GM13977 (cell line): ENCODE measurements at regions of chr14 and their contacts with region 1.

Region 1: DNA sequence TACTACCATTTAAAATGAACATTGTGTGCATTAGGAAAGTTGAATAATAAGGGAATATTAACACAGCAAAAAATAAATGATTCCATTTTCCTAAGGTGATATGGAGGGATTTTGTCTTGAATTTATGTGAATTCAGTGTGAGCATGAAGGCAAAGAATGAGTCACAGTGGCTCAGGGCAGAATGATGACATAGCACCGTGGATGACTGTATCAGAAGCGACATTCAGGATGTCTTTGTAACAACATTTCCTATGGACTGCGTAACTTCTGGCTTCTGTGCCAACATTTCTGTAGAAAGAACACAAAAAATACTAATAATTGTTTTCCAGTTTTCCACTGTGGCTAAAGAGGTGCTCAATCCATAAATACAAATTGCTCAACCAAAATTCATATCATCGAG is 54.6 kb downstream of the TTC8 start:
- DNase-seq: no peak
- CTCF ChIP-seq: no peak

Region 2: DNA sequence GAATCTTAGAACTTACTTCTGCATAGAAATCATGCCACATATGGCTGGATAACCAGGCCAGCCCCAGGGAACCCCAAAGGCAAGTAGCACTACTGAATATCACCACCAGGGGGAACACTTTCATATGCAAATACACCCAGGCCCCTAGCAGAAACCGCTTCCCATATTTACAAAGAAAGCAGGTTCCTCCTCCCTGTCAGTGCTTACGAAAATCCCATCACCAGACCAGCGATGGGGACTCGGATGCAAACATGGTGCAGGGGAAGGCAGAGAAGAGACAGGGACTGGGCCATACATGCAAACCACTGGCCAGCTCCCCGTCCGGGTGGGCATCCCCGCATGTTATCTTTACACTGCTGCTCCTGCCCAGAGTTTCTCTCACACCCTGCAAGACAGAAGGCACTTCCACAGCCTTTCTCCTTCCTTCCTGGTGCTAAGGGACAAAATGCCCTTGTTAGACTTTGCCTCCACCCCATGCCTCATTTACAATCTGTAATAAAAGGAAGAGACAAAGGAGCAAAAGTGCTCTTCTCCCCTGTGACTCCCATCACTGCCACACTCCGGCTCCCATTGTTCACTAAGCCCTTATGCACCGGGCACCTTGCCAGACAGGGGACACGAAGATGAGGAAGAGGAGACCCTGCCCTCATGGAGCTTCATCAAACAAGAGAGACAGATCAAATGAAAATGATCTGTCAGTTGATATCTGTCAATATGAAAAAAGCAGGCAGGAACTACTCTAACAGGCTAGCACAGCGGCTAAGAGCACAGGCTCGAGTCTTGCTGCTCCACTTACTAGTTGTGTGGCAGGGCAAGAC is 386.5 kb before region 1 on chr14:
- in situ Hi-C with region 1: loop called (anchors 25 kb)
- DNase-seq: peak; percentile 74
- CTCF ChIP-seq: peak; percentile 73

Region 3: GRCh38 chr14:88749139-88749538 is 129.9 kb before region 1 on chr14:
- in situ Hi-C with region 1: no loop called
- DNase-seq: no peak
- CTCF ChIP-seq: no peak

Region 4: DNA sequence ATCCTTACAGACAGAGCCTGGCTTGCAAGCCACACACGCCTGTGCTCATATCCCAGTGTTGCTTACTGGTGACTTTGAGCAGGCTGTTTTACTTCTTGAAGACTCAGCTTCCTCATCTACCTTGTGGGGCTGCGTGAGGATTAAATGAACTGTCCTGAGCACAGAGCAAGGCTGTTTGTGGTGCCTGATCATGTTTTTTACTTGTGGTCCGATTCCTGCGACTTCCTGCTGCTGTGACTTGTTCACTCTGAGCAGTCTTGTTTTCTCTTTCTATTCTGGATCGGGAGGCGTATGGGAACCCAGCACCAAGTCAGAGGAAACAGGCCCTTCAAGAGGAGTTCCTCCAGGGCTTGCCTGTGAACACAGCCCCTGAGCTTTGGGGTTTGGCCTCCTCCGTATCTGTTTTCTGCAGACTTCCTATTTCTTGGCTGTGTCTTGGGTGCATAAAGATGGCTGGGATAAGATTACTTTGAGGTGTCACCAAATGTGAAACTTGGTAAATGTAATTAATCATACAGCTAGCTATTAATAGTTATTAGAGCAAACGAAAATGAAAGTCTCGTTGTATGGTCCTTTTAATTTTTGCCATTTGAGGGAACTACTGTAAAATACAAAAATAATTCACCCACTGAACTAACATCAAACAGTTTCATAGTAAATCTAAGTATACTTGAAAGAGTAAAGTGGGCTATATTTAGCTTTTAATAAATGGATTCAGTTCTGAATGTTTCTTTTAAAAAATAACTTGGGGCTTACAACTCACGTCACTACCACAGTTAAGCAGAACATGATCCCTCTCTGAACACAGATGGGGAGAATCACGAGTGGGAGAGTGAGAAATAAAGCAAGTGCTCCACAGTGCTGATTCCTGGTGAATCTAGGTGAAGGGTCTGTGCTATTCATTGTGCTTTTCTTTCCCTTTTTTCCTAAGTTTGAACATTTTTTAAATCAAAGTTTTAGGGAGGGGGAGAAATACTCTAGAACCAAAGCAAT is 286.5 kb after region 1 on chr14:
- in situ Hi-C with region 1: no loop called
- DNase-seq: peak; percentile 52
- CTCF ChIP-seq: no peak